HCT116 (cell line): ENCODE measurements at regions of chr6 and their contacts with region 1.

Region 1: DNA sequence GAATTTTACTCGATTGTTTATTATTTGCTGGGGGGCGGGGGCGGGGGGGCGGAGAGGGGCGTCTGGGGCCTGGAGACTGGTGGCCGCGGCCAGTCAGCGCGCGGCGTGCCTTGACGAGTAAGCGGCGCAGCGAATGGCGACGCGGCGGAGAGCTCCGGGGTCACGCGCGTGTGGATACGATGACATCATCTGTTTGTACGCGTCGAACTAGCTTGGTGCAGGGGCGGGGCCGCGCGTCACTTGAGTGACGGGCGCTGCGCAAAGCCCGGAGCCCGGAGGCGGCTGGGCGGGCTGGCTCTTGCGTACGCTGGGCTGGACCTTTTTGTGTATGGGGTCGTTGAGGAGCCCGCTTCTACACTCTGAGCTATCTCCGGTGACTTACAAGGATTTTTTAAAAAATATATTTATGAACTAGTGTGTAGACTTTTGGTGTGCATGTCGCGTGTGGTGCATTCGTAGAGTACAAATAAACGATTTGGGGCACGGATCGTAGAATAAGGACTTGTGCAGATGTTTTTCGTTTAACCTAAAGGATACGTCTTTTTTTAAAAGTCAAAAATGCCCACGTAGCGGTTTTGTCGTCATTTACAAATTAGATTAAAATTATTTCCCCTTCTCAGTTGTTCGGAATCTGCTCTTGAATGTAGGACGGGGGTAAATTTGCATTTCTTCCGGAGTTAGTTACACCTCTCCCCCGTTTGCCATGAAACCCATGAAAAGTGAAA is 2.2 kb upstream of the FOXO3 start:
- DNase-seq: peak; percentile 97
- ATAC-seq: peak; percentile 66
- H3K4me3 ChIP-seq: peak overlapping the region; percentile 86
- H3K27ac ChIP-seq: peak overlapping the region; percentile 84
- H3K4me1 ChIP-seq: peaks cover 22 to 39% of the 10 kb centered on the region in 2 experiments
- H3K27me3 ChIP-seq: no peaks in the 10 kb centered on the region
- CTCF ChIP-seq: no peak
- POLR2A ChIP-seq: no peak
- RAD21 ChIP-seq: no peak

Region 2: GRCh38 chr6:108484016-108484415 is 74.5 kb before region 1 on chr6:
- CTCF ChIA-PET with region 1: no interaction called
- POLR2A ChIA-PET with region 1: no interaction called
- RAD21 ChIA-PET with region 1: no interaction called
- intact Hi-C with region 1: no loop called
- DNase-seq: no peak
- ATAC-seq: no peak
- H3K4me3 ChIP-seq: no peak overlapping the region
- H3K27ac ChIP-seq: no peak overlapping the region
- H3K4me1 ChIP-seq: no peaks in the 10 kb centered on the region
- H3K27me3 ChIP-seq: no peaks in the 10 kb centered on the region
- CTCF ChIP-seq: no peak
- POLR2A ChIP-seq: no peak
- RAD21 ChIP-seq: no peak

Region 3: GRCh38 chr6:108673602-108674001 is 115.1 kb after region 1 on chr6:
- CTCF ChIA-PET with region 1: no interaction called
- POLR2A ChIA-PET with region 1: no interaction called
- RAD21 ChIA-PET with region 1: no interaction called
- intact Hi-C with region 1: loop called (anchors 5 kb)
- DNase-seq: peak; percentile 78
- ATAC-seq: peak; percentile 96
- H3K4me3 ChIP-seq: peak overlapping the region in 1 of 2 experiments; percentile 7; a peak in 1 of 4 replicates
- H3K27ac ChIP-seq: no peak overlapping the region
- H3K4me1 ChIP-seq: peaks cover 10 to 54% of the 10 kb centered on the region in 2 experiments
- H3K27me3 ChIP-seq: no peaks in the 10 kb centered on the region
- CTCF ChIP-seq: no peak
- POLR2A ChIP-seq: no peak
- RAD21 ChIP-seq: peak; percentile 31

Region 4: GRCh38 chr6:108737594-108738546 is 179.3 kb after region 1 on chr6:
- CTCF ChIA-PET with region 1: no interaction called
- POLR2A ChIA-PET with region 1: interaction called, 5 read pairs
- RAD21 ChIA-PET with region 1: no interaction called
- intact Hi-C with region 1: loop called (anchors 1 kb)
- DNase-seq: peak; percentile 86
- ATAC-seq: peak; percentile 23
- H3K4me3 ChIP-seq: peak overlapping the region in 1 of 2 experiments; percentile 53; a peak in 2 of 4 replicates
- H3K27ac ChIP-seq: peak overlapping the region; percentile 68; the same call in 1 of the 2 replicates
- H3K4me1 ChIP-seq: peaks cover 41 to 82% of the 10 kb centered on the region in 2 experiments
- H3K27me3 ChIP-seq: no peaks in the 10 kb centered on the region
- CTCF ChIP-seq: no peak
- POLR2A ChIP-seq: no peak
- RAD21 ChIP-seq: no peak

Region 5: DNA sequence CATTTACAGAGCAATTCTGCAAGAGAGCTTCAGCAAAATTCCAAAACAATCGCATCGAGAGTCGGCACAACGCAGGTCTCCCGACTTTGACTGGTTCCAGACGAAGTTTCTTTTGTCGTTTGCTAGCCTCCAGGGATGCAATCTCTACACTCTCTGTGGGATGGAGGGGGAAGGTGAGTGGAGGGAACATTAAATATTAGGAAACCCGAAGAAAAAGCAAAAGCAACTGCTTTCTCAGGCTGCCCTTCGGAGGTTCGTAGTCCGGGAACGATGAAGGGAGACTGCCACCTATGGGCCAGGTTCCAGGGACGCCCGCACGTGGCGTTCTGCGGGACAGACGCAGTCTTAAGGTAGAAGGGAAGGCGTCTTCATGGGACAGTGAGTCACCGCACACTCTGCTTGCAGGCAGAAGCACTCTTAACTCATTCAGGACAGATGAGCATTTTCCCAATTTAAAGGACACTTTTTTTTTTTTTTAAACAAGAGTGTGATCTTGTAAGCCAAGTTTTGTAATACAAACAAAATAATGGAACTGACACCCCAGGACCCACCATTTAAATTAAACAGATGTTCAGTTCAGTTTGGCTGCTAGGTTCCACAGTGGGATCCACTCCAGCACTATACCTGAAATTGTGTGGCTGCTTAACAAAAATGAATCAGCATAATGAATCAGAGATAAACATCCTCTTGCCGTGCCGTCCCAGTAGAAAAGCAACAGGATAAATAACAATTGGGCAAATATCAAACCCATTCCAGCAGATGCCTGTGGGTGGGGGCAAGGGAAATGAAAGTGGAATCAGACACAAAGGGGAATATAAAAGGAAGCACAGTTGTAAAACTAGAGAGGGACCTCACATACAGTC is 223.9 kb after region 1 on chr6:
- CTCF ChIA-PET with region 1: no interaction called
- POLR2A ChIA-PET with region 1: no interaction called
- RAD21 ChIA-PET with region 1: no interaction called
- intact Hi-C with region 1: loop called (anchors 1 kb)
- DNase-seq: peak; percentile 80
- ATAC-seq: peak; percentile 96
- H3K4me3 ChIP-seq: peak overlapping the region; percentile 31 to 41
- H3K27ac ChIP-seq: 0 out of 2 replicates have a peak overlapping the region, but pooled peaks have one; percentile 1
- H3K4me1 ChIP-seq: peaks cover 4 to 22% of the 10 kb centered on the region in 2 experiments; a peak in 3 of 4 replicates
- H3K27me3 ChIP-seq: no peaks in the 10 kb centered on the region
- CTCF ChIP-seq: peak; percentile 69 to 87 (median 79); a peak in 5 of 6 replicates
- POLR2A ChIP-seq: no peak
- RAD21 ChIP-seq: peak; percentile 96

Region 6: GRCh38 chr6:108809211-108809610 is 250.7 kb after region 1 on chr6:
- CTCF ChIA-PET with region 1: no interaction called
- POLR2A ChIA-PET with region 1: no interaction called
- RAD21 ChIA-PET with region 1: no interaction called
- intact Hi-C with region 1: no loop called
- DNase-seq: no peak
- ATAC-seq: no peak
- H3K4me3 ChIP-seq: no peak overlapping the region
- H3K27ac ChIP-seq: no peak overlapping the region
- H3K4me1 ChIP-seq: no peaks in the 10 kb centered on the region
- H3K27me3 ChIP-seq: no peaks in the 10 kb centered on the region
- CTCF ChIP-seq: no peak
- POLR2A ChIP-seq: no peak
- RAD21 ChIP-seq: no peak

Region 7: GRCh38 chr6:108835218-108835850 is 276.8 kb after region 1 on chr6:
- CTCF ChIA-PET with region 1: no interaction called
- POLR2A ChIA-PET with region 1: interaction called, 3 read pairs
- RAD21 ChIA-PET with region 1: no interaction called
- intact Hi-C with region 1: loop called (anchors 1 kb)
- DNase-seq: peak; percentile 67
- ATAC-seq: peak; percentile 99
- H3K4me3 ChIP-seq: no peak overlapping the region
- H3K27ac ChIP-seq: no peak overlapping the region
- H3K4me1 ChIP-seq: no peaks in the 10 kb centered on the region
- H3K27me3 ChIP-seq: no peaks in the 10 kb centered on the region
- CTCF ChIP-seq: peak; percentile 78 to 92 (median 85)
- POLR2A ChIP-seq: no peak
- RAD21 ChIP-seq: peak; percentile 88

Region 8: GRCh38 chr6:109382576-109383437 is 824.3 kb after region 1 on chr6:
- CTCF ChIA-PET with region 1: no interaction called
- POLR2A ChIA-PET with region 1: no interaction called
- RAD21 ChIA-PET with region 1: no interaction called
- intact Hi-C with region 1: loop called (anchors 5 kb)
- DNase-seq: peak; percentile 89
- ATAC-seq: peak; percentile 84
- H3K4me3 ChIP-seq: peak overlapping the region; percentile 75 to 80
- H3K27ac ChIP-seq: peak overlapping the region; percentile 92
- H3K4me1 ChIP-seq: peaks cover 4 to 27% of the 10 kb centered on the region in 2 experiments; a peak in 3 of 4 replicates
- H3K27me3 ChIP-seq: no peaks in the 10 kb centered on the region
- CTCF ChIP-seq: peak; percentile 53 to 79 (median 60); a peak in 5 of 6 replicates
- POLR2A ChIP-seq: peak; percentile 16
- RAD21 ChIP-seq: peak; percentile 87